Dorsolateral prefrontal cortex (tissue), 120 donors: ENCODE measurements at regions of chr12 and their contacts with region 1.

Region 1: DNA sequence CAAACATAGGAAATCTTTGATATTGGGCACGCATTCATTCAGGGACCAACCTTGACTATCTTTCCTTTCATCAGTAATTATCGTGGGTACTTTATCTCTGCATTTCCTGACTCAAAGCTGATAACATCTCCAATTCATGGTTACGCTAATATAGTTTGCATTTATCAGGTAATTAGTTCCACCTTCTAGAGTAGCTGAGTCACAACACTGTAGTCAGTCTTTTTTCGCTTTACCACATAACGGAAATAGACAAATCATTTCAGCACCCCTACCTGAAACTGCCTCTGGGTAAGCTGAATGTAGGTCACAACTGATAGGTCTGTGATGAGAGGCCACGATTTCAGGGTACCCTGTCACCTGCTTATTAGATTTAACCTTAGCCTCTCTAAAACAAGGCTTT is 36.7 kb upstream of the IL22 start:
- DNase-seq: no peak
- H3K4me3 ChIP-seq: no peak overlapping the region
- H3K27ac ChIP-seq: no peak overlapping the region
- H3K27me3 ChIP-seq: no peaks in the 10 kb centered on the region
- CTCF ChIP-seq: no peak

Region 2: GRCh38 chr12:68236421-68237059 is 53.6 kb before region 1 on chr12:
- intact Hi-C with region 1: loop called in 1 of 2 experiments (anchors 10 kb)
- DNase-seq: no peak
- H3K4me3 ChIP-seq: peak overlapping the region in 38 of 59 donors; percentile 1 to 58 (median 24)
- H3K27ac ChIP-seq: peak overlapping the region in 23 of 59 donors; percentile 3 to 81 (median 52)
- H3K27me3 ChIP-seq: no peaks in the 10 kb centered on the region
- CTCF ChIP-seq: no peak

Region 3: DNA sequence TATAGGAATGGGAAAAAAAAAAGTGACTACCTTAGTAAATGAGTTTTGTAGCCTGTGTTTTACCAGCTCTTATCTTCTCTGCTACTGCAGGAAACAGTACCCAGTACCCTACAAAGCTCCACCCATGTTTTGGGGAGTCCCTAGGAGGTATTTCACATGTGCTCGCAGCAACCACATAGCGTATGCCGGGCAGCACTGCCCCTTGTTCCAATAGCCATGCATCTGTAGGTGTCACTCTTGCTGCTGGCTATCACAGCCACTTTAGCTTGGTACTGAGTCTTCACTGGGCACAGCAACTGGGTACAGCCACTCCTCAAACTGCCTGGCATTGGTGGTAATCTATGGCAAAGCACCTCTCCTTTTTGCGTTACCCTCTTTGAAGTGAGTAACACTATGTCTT is 44.0 kb after region 1 on chr12:
- intact Hi-C with region 1: no loop called
- DNase-seq: peak in 2 of 10 donors; percentile 18 to 45
- H3K4me3 ChIP-seq: no peak overlapping the region
- H3K27ac ChIP-seq: no peak overlapping the region
- H3K27me3 ChIP-seq: peaks cover 0 to 7% (median 0%) of the 10 kb centered on the region in 45 donors
- CTCF ChIP-seq: peak in 7 of 56 donors; percentile 8 to 36 (median 13)

Region 4: DNA sequence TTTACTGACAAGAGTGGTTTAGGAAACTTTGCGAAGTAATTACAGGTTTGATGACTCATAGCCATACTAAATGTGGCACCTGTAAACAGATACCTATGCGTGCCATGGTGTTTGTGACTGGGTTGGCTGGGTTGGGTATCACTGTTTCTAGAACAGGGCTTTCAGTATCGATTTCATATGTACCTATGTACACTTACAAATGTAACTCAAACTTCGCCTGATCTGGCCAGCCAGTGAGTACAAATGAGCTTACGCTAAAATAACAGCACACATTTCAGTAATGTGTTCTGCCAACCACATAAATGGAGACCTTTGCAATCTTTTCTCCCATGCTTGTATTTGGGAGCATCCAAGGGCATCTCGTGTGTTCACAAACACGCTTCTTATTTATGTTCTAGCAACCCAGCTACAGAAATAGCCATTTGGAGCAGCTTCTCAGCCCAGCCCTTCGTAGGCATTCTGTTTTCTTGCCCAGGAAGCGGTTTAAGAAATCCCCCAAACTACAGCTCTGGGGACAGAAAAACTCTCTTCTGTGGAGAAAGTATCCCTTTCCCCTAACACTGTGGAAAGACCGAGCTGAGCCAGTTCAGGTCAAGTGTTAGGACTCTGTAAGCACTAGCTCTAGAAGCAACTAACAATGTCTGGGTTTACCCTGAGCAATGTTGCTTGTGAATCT is 84.3 kb after region 1 on chr12:
- intact Hi-C with region 1: no loop called
- DNase-seq: no peak
- H3K4me3 ChIP-seq: no peak overlapping the region
- H3K27ac ChIP-seq: no peak overlapping the region
- H3K27me3 ChIP-seq: peaks cover 0 to 5% (median 0%) of the 10 kb centered on the region in 45 donors
- CTCF ChIP-seq: no peak